ENCODE measurements at regions of chr6 and their contacts with region 1.

Region 1: GRCh38 chr6:73528897-73529296 is 8.1 kb upstream of the EEF1A1 start:
- DNase-seq: no peak
- H3K4me3 ChIP-seq: no peak overlapping the region
- H3K27ac ChIP-seq: no peak overlapping the region
- H3K4me1 ChIP-seq: peaks cover 3% of the 10 kb centered on the region
- H3K27me3 ChIP-seq: no peaks in the 10 kb centered on the region
- CTCF ChIP-seq: no peak

Region 2: DNA sequence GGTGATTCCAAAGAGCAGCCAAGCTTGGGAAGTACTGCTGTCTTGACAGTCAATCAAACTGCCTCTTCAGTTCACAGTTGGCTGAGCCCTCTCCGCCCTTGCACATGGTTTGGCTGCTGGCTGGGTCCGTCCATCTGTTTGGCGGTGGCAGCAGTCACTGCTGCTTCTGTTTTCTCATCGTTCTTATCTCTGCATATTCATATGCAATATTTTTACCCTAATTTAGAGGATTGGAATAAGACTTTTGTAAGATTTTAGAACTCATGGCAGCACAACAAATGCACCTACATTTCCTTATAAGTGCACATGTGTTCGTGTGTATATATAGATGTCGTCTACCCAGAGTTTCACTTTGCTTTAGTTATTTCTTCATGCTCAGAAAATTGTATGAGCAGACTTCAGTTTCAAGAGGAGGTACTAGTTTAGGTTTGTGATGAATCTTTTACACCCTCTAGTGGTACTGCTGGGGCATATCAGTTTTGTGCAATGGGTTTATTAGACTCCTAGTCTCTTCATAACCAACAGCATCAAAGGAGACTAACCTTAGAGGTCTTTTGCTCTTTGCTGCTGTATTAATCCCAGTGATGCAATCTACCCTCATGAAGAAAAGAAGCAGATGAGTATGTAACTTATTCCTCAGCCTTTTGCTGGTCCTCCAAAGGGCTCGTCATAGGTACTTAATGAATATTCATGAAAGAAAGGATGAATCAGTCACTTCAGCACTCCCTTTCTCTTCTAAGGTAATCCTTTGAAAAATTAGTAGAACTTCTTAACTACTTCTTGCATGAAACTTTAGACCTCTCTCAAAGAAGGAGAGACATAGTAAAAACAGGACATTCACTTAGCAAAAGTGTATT is 347.9 kb before region 1 on chr6:
- CTCF ChIA-PET with region 1: no interaction called
- dilution Hi-C with region 1: no loop called
- in situ Hi-C with region 1: no loop called
- intact Hi-C with region 1: no loop called
- DNase-seq: peak; percentile 59
- H3K4me3 ChIP-seq: no peak overlapping the region
- H3K27ac ChIP-seq: no peak overlapping the region
- H3K4me1 ChIP-seq: no peaks in the 10 kb centered on the region
- H3K27me3 ChIP-seq: no peaks in the 10 kb centered on the region
- CTCF ChIP-seq: peak; percentile 90 to 91

Region 3: DNA sequence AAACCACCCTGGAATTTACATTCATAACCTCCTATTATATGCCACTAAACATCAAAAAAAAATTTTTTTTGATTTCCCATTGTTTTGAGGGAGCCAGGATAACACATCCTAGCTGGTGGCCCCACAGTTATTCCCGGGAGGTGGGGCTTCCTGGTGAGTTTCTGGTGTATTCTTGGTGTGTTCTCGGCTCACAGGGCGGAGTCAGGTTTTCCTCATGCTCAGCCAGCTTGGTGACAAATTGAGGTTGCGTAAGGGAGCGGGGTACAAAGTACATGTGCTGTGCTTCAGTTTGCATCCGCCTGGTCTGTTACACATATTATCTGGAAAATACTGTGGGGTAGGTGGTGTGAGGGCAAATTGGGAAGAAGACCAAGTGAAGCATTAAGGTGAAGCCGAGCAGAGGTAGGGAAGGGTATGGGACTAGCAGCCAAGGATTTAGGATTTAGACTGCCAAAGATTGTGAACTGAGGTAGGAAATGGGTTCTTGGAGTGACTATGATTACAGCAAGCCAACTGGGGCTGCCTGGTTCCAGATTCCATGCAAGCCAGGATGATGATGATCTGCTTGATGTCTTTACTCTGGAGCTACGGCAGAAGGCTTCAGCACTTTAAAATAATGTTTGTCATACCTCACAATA is 38.2 kb after region 1 on chr6:
- CTCF ChIA-PET with region 1: no interaction called
- dilution Hi-C with region 1: loop called (anchors 5 kb)
- in situ Hi-C with region 1: no loop called
- intact Hi-C with region 1: no loop called
- DNase-seq: peak; percentile 24
- H3K4me3 ChIP-seq: no peak overlapping the region
- H3K27ac ChIP-seq: no peak overlapping the region
- H3K4me1 ChIP-seq: peaks cover 16% of the 10 kb centered on the region
- H3K27me3 ChIP-seq: no peaks in the 10 kb centered on the region
- CTCF ChIP-seq: no peak

Region 4: GRCh38 chr6:74128536-74128935 is 599.6 kb after region 1 on chr6:
- CTCF ChIA-PET with region 1: no interaction called
- dilution Hi-C with region 1: no loop called
- in situ Hi-C with region 1: no loop called
- intact Hi-C with region 1: no loop called
- DNase-seq: no peak
- H3K4me3 ChIP-seq: no peak overlapping the region
- H3K27ac ChIP-seq: no peak overlapping the region
- H3K4me1 ChIP-seq: no peaks in the 10 kb centered on the region
- H3K27me3 ChIP-seq: no peaks in the 10 kb centered on the region
- CTCF ChIP-seq: no peak